ENCODE measurements at regions of chr6 and their contacts with region 1.

Region 1: GRCh38 chr6:18122124-18123093 is at the start of gene NHLRC1:
- DNase-seq: peak; percentile 98
- total RNA-seq, gene NHLRC1: 1.0 to 1.9 TPM

Region 2: GRCh38 chr6:17816921-17817611 is 305.3 kb before region 1 on chr6:
- intact Hi-C with region 1: loop called in 1 of 2 experiments (anchors 10 kb)
- DNase-seq: no peak

Region 3: GRCh38 chr6:17831135-17831534 is 291.3 kb before region 1 on chr6:
- intact Hi-C with region 1: loop called in 1 of 2 experiments (anchors 10 kb)
- DNase-seq: no peak

Region 4: DNA sequence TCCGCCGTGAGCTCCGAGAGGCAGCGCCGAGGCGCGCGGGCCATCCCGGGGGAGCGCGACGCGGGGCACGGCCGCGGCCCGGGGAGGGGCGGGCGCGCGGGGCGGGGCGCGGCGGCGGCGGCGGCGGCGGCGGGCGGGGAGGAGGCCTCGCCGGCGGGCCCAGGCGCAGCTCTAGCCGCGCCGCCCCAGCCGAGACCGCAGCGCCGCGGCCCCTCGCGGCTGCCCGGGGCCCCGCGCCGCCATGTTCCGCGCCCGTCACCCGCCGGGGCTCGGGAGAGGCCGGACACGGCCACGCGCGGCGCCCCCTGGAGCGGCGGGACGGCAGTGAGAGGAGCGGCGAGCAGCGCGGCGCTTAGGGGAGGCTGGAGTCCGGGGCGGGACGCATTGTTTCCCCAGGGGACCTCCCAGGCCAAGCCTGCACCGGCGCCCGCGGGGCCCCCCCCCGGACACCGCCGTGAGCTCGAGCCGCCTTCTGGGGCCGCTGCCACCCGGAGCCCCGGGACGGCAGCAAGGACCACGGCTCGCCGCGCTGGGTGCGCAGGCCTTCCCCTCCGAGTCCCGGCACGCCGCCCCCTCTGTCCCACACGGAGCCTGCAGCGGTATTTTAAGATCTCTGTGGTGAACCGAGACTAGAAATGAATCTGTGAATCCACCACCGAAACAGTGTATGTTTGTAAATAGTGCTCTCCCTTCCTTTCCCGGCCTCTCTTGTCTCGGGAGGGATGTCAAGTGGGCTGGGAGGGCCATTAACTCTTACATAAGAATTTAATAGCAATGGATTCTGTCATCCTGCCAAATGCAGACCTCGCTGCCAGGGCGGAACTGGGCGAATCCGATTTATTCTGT is 134.6 kb before region 1 on chr6 and contains the start of gene KIF13A:
- intact Hi-C with region 1: loop called in 1 of 2 experiments (anchors 5 kb)
- DNase-seq: peak; percentile 92
- total RNA-seq, gene KIF13A: 74.6 to 110 TPM